Activated B cell treated with CpG ODN at 0.5 μM for 24 hours (primary cell): ENCODE measurements at regions of chr3 and their contacts with region 1.

Region 1: GRCh38 chr3:194404365-194405140 is 5.5 kb upstream of the GP5 start:
- DNase-seq: no peak
- ATAC-seq: no peak
- H3K4me3 Mint-ChIP-seq: no peak overlapping the region
- H3K27ac Mint-ChIP-seq: no peak overlapping the region
- H3K4me1 Mint-ChIP-seq: peaks cover 2% of the 10 kb centered on the region
- H3K27me3 Mint-ChIP-seq: peaks cover 5% of the 10 kb centered on the region
- CTCF ChIP-seq: peak; percentile 58

Region 2: DNA sequence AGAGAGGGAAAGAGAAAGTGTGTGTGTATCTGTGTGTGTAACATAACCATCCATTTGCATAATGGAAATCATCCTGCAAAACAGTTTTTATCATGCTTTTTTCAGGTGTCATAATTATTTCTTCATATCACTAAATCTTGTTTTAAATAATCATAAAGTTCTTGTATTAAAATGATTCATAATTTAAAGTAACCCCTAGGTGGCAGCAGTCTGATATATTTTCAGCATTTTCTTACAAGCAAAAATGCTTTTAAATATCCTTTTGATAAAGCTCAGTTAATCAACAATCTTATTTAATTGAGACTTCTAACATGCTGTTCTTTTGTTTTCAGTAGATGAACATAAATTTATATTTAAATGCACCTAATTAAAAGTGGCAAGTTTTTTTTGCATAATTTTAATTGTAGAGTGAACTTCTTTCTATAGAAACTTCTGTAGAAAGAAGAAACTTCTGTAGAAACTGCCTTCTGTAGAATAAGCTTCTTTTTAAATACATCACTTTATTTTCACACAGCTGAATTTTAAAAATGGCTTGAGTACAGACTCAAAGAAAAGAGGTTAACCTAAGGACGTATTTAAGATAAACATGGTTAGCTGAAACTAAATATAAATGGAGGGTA is 739.1 kb before region 1 on chr3:
- CTCF ChIA-PET with region 1: no interaction called
- POLR2A ChIA-PET with region 1: no interaction called
- intact Hi-C with region 1: loop called (anchors 1 kb)
- DNase-seq: no peak
- ATAC-seq: no peak
- H3K4me3 Mint-ChIP-seq: no peak overlapping the region
- H3K27ac Mint-ChIP-seq: no peak overlapping the region
- H3K4me1 Mint-ChIP-seq: peaks cover 6% of the 10 kb centered on the region
- H3K27me3 Mint-ChIP-seq: no peaks in the 10 kb centered on the region
- CTCF ChIP-seq: peak; percentile 95

Region 3: GRCh38 chr3:193805509-193805908 is 599.0 kb before region 1 on chr3:
- CTCF ChIA-PET with region 1: no interaction called
- POLR2A ChIA-PET with region 1: no interaction called
- intact Hi-C with region 1: no loop called
- DNase-seq: no peak
- ATAC-seq: no peak
- H3K4me3 Mint-ChIP-seq: no peak overlapping the region
- H3K27ac Mint-ChIP-seq: no peak overlapping the region
- H3K4me1 Mint-ChIP-seq: no peaks in the 10 kb centered on the region
- H3K27me3 Mint-ChIP-seq: no peaks in the 10 kb centered on the region
- CTCF ChIP-seq: no peak

Region 4: GRCh38 chr3:194235160-194235559 is 169.4 kb before region 1 on chr3:
- CTCF ChIA-PET with region 1: no interaction called
- POLR2A ChIA-PET with region 1: no interaction called
- intact Hi-C with region 1: no loop called
- DNase-seq: no peak
- ATAC-seq: no peak
- H3K4me3 Mint-ChIP-seq: no peak overlapping the region
- H3K27ac Mint-ChIP-seq: no peak overlapping the region
- H3K4me1 Mint-ChIP-seq: no peaks in the 10 kb centered on the region
- H3K27me3 Mint-ChIP-seq: peaks cover 22% of the 10 kb centered on the region
- CTCF ChIP-seq: no peak

Region 5: DNA sequence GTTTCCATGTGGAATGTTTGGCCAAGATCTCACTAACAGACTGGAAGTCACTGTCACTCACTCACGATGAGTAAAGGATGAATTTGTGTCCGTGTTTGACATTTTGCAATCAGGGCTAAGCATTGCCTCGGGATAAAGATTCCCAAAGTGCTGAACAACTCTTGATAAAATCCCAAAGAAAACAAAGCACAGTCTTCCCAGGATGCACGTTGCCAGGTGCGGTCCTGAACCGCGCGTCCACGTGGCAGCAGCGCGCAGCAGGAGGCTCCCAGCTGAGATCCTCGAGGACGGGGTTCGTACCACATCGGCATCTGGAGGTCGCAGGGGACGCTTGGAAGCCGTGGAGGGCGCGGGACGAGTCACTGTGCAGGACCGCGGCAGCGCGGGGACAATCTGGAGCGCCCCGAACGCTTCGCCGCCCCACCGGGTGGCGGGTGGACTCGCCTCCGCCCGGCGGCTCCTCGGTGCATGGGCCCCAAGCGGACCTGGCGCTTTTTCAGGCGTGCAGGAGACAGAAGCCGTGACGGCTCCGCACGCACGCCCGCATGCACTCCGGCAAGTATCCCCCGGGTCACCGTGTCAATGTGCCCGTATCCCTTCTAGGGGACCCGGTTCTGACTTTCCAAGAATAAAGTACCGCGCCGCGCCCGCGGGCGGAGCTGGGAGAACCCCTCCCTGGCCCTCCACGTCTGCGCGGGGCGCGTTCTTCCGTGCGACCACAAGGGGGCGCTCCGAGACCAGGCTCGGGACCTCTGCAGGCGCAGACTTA is 71.2 kb before region 1 on chr3:
- CTCF ChIA-PET with region 1: interaction called, 13 read pairs
- POLR2A ChIA-PET with region 1: no interaction called
- intact Hi-C with region 1: loop called (anchors 1 kb)
- DNase-seq: peak; percentile 87
- ATAC-seq: peak; percentile 96
- H3K4me3 Mint-ChIP-seq: peak overlapping the region; percentile 76
- H3K27ac Mint-ChIP-seq: no peak overlapping the region
- H3K4me1 Mint-ChIP-seq: peaks cover 7% of the 10 kb centered on the region
- H3K27me3 Mint-ChIP-seq: peaks cover 28% of the 10 kb centered on the region
- CTCF ChIP-seq: peak; percentile 97